ENCODE measurements at regions of chr1 and their contacts with region 1.

Region 1: GRCh38 chr1:26279456-26280332 is at the start of gene SH3BGRL3:
- DNase-seq: peak; percentile 95
- CTCF ChIP-seq: peak; percentile 47

Region 2: DNA sequence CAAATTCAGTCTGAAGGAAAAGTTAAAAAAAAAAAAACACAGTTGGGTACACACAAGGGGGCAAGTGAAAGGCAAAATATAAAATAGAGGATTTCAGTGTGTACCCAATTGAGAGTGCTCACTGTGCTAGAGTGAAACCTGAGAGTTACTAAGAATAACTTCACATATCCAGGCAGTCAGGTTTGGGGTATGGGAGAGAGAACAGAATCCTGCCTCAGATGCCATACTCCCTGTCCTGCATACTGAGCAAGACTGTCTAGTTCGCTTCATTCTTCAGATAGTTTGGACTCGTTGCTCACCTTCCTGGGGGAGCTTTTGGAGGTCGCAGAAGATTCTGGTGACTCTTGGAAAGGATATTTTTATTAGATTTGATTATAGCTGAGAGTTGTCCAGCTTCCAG is 25.3 kb before region 1 on chr1:
- CTCF ChIA-PET with region 1: interaction called, 16 read pairs
- POLR2A ChIA-PET with region 1: no interaction called
- DNase-seq: no peak
- CTCF ChIP-seq: no peak

Region 3: DNA sequence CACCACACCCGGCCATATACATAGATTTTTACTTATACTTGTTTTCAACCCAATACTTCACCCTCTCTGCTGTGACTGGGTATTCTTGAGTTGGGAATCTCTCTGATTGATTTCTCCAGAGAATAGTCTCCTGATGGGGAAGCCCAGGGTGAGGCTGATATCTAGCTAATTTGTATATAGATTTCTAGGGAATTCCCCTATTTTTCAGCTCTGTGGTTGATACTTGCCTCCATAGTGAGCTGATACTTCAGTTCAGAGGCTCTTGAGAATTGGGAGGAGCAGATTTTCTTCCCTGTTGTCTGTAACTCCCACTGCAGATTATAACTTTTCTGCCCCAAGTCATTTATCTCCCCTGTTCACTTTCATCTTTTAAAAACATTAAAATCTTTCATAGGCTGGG is 14.3 kb before region 1 on chr1:
- CTCF ChIA-PET with region 1: interaction called, 42 read pairs
- POLR2A ChIA-PET with region 1: no interaction called
- DNase-seq: no peak
- CTCF ChIP-seq: no peak

Region 4: GRCh38 chr1:26306290-26307229 is 26.9 kb after region 1 on chr1 and contains the start of gene UBXN11:
- CTCF ChIA-PET with region 1: interaction called, 690 read pairs
- POLR2A ChIA-PET with region 1: no interaction called
- DNase-seq: peak; percentile 98
- CTCF ChIP-seq: no peak

Region 5: DNA sequence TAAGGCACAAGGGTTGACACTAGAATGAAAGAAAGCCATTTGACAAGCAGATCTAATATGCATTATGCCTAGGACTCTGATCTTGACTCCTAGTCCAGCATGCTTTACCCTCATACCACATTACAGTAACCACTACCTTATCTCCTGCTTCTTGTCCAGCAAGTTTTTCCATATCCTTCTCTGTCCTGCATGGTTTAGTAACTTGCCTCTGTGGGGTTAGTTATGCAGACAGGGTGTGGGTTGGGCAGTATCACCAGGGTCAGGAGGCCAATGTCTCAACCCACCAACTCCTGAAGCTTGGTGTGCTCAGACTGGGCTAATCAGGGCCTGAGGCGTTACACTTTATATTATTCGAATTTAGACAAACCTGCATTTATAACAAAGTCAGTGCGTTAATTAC is 171.2 kb after region 1 on chr1:
- CTCF ChIA-PET with region 1: no interaction called
- POLR2A ChIA-PET with region 1: no interaction called
- DNase-seq: no peak
- CTCF ChIP-seq: no peak